Head of caudate nucleus (tissue), 42 donors: ENCODE measurements at regions of chr6 and their contacts with region 1.

Region 1: GRCh38 chr6:13711733-13712598 is at the start of gene RANBP9:
- DNase-seq: peak; percentile 60 to 93 (median 84)

Region 2: DNA sequence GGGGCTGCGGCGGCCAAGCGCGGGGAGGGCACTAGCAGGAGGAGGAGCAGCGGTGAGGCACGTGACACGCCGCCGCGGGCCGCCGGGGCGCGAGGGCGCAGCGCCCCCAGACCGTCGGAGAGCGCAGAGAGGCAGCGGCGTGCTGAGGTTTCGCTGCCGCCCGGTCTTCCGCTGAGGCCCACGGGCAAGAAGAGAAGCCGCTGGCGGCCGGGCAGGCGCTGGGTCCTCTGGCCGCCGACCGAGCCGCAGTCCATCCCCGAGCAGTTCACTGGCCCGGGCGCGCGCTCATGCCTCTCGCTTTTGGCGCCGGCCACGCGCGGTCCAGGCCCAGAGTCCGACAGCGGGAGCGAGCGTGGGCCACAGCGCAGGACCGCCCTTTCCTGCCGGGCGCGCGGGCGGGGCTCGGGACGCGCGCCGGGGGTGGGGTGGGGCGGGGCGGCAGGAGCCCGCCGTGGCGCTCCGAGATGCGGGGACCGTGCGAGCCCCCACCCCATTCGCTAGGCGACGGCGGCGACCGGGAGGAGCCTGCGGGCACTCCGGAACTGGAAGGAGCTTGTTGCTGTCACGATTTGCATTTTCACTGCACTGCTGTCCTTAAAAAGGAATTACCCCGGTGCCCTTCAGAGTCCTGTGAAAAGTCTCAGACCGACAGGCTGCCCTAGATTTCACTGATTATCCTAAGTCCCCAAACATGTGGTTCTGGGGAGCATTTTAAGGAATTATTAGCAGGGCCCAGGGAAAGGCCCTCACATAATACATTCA is 102.4 kb after region 1 on chr6 and contains the start of gene MCUR1:
- intact Hi-C with region 1: loop called (anchors 5 kb)
- DNase-seq: peak; percentile 49 to 94 (median 88)

Region 3: GRCh38 chr6:13831615-13832014 is 119.6 kb after region 1 on chr6:
- intact Hi-C with region 1: no loop called
- DNase-seq: no peak